ENCODE measurements at regions of chr16 and their contacts with region 1.

Region 1: GRCh38 chr16:24504472-24505345 is 34.7 kb upstream of the RBBP6 start:
- DNase-seq: peak; percentile 78
- H3K4me3 Mint-ChIP-seq: no peak overlapping the region
- H3K27ac Mint-ChIP-seq: no peak overlapping the region
- H3K4me1 Mint-ChIP-seq: no peaks in the 10 kb centered on the region
- H3K27me3 Mint-ChIP-seq: no peaks in the 10 kb centered on the region
- CTCF ChIP-seq: peak; percentile 88

Region 2: DNA sequence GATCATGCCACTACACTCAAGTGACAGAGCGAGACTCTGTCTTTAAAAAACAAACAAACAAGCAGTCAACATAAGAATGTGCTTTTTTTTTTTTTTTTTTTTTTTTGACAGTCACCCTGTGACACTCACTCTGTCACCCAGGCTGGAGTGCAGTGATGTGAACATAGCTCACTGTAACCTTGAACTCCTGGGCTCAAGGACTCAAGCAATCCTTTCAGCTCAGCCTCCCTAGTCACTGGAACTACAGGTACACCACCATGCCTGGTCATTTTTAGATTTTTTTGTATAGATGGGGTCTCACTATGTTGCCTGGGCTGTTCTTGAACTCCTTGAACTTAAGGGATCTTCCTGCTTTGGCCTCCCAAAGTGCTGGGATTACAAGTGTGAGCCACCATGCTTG is 765.2 kb before region 1 on chr16:
- CTCF ChIA-PET with region 1: interaction called, 6 read pairs
- POLR2A ChIA-PET with region 1: no interaction called
- intact Hi-C with region 1: loop called (anchors 5 kb)
- DNase-seq: no peak
- H3K4me3 Mint-ChIP-seq: no peak overlapping the region
- H3K27ac Mint-ChIP-seq: no peak overlapping the region
- H3K4me1 Mint-ChIP-seq: peaks cover 11% of the 10 kb centered on the region
- H3K27me3 Mint-ChIP-seq: peaks cover 53% of the 10 kb centered on the region
- CTCF ChIP-seq: no peak

Region 3: DNA sequence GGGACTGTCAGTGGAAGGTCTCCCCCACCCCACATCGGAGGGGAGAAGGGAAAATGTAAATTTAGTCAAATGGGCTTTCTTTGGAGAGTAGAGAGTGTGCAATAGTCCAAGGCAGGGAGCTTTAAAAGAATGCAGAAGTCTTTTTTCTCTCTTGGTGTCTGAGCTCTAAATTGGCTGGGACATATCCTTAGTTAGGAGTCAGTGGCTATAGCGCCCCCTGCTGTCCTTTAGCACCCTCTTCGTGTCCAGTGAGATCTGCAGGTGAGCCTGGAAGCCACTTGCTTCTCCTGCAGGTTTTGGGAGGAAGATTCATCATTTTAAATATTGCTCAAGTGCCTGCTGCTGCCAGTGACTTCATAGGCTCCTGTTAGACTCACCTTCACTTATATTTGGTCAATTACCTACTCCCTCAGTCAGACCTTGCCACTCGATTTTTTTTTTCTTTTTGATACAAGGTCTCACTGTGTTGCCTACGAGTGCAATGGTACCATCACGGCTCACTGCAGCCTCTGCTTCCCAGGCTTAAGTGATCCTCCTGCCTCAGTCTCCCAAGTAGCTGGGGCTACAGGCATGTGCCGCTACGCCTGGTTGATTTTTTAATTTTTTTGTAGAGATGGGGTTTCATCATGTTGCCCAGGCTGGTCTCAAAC is 494.1 kb before region 1 on chr16:
- CTCF ChIA-PET with region 1: interaction called, 12 read pairs
- POLR2A ChIA-PET with region 1: no interaction called
- intact Hi-C with region 1: no loop called
- DNase-seq: peak; percentile 83
- H3K4me3 Mint-ChIP-seq: no peak overlapping the region
- H3K27ac Mint-ChIP-seq: no peak overlapping the region
- H3K4me1 Mint-ChIP-seq: no peaks in the 10 kb centered on the region
- H3K27me3 Mint-ChIP-seq: peaks cover 24% of the 10 kb centered on the region
- CTCF ChIP-seq: peak; percentile 77

Region 4: GRCh38 chr16:24041826-24042631 is 462.7 kb before region 1 on chr16:
- CTCF ChIA-PET with region 1: interaction called, 508 read pairs
- POLR2A ChIA-PET with region 1: interaction called, 3 read pairs
- intact Hi-C with region 1: loop called (anchors 1 kb)
- DNase-seq: peak; percentile 74
- H3K4me3 Mint-ChIP-seq: no peak overlapping the region
- H3K27ac Mint-ChIP-seq: no peak overlapping the region
- H3K4me1 Mint-ChIP-seq: no peaks in the 10 kb centered on the region
- H3K27me3 Mint-ChIP-seq: peaks cover 33% of the 10 kb centered on the region
- CTCF ChIP-seq: peak; percentile 86

Region 5: DNA sequence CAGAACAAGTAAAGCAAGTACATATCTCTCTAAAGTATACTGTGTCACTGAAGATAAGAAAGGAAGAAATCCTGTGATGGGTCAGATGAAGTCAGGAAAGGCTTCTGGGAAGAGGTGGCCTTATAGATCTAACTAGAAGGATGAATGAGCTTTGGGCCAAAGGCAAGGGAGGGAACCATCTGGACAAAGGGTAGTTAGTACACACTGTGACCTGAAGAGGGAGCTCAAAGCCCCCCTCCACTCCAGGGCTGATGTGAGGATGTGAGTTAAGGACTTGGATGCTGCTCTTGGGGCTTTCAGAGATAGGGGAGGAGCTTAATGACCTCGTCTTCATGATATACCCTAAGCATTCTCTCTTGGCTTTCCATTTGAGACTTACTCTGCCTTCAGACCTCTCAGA is 433.9 kb before region 1 on chr16:
- CTCF ChIA-PET with region 1: interaction called, 31 read pairs
- POLR2A ChIA-PET with region 1: interaction called, 3 read pairs
- intact Hi-C with region 1: loop called (anchors 1 kb)
- DNase-seq: peak; percentile 65
- H3K4me3 Mint-ChIP-seq: no peak overlapping the region
- H3K27ac Mint-ChIP-seq: no peak overlapping the region
- H3K4me1 Mint-ChIP-seq: peaks cover under 1% of the 10 kb centered on the region
- H3K27me3 Mint-ChIP-seq: peaks cover 25% of the 10 kb centered on the region
- CTCF ChIP-seq: peak; percentile 65

Region 6: GRCh38 chr16:24163935-24164334 is 340.8 kb before region 1 on chr16:
- CTCF ChIA-PET with region 1: no interaction called
- POLR2A ChIA-PET with region 1: no interaction called
- intact Hi-C with region 1: no loop called
- DNase-seq: no peak
- H3K4me3 Mint-ChIP-seq: no peak overlapping the region
- H3K27ac Mint-ChIP-seq: no peak overlapping the region
- H3K4me1 Mint-ChIP-seq: no peaks in the 10 kb centered on the region
- H3K27me3 Mint-ChIP-seq: peaks cover 29% of the 10 kb centered on the region
- CTCF ChIP-seq: no peak

Region 7: GRCh38 chr16:24493859-24494258 is 10.8 kb before region 1 on chr16:
- CTCF ChIA-PET with region 1: interaction called, 27 read pairs
- POLR2A ChIA-PET with region 1: interaction called, 3 read pairs
- intact Hi-C with region 1: no loop called
- DNase-seq: peak; percentile 81
- H3K4me3 Mint-ChIP-seq: peak overlapping the region; percentile 28
- H3K27ac Mint-ChIP-seq: peak overlapping the region; percentile 75
- H3K4me1 Mint-ChIP-seq: peaks cover 19% of the 10 kb centered on the region
- H3K27me3 Mint-ChIP-seq: no peaks in the 10 kb centered on the region
- CTCF ChIP-seq: no peak

Measured in MCF 10A (cell line).